AG04450 (cell line): ENCODE measurements at regions of chr4 and their contacts with region 1.

Region 1: GRCh38 chr4:84966383-84967242 is at the start of gene WDFY3:
- DNase-seq: peak; percentile 74
- H3K4me3 ChIP-seq: peak within 1 kb of the TSS; percentile 78
- H3K27ac ChIP-seq: peak within 1 kb of the TSS; percentile 81
- H3K27me3 ChIP-seq: no peaks in the 10 kb centered on the region
- CTCF ChIP-seq: peak; percentile 23; the same call in 1 of the 2 replicates
- polyA plus RNA-seq, gene WDFY3: 30.6 and 31.5 TPM in 2 replicates

Region 2: DNA sequence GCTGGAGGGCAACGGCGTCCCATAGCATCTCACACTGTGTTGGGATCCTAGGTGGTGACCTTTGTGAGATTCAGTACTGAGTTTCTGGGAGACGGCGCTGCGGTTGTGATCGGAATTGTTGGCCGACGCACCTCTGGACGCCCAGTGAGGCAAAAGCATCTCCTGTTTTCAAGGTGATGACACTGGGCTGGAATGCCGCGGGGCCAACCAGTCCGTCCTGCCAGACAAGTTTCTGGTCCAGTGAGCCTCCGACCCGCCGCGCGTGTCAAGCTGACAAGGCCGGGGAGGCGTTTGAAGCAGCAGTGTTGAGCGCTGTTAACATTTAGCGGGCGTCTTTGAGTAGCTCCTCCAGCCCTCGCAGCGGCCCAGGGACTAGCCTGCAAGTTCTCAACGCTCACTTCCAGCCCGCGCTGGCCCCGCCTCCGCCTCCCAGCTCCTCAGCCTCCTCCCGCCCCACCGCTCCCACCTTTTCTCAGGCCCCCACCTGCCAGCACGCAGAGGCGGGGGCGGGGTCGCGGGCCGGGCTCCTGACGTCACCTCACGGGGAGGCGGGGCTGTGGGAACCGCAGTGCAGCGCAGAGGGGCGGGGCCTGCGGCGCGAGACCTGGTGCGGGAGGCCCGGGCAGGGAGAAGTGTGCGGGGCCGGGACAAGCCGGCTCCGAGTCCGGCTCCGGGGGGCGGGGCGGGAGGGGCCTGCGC is 384.2 kb before region 1 on chr4:
- CTCF ChIA-PET with region 1: interaction called, 56 read pairs
- POLR2A ChIA-PET with region 1: interaction called, 3 read pairs
- DNase-seq: no peak
- H3K4me3 ChIP-seq: peak overlapping the region; percentile 58
- H3K27ac ChIP-seq: no peak overlapping the region
- H3K27me3 ChIP-seq: peaks cover 38% of the 10 kb centered on the region
- CTCF ChIP-seq: no peak

Region 3: GRCh38 chr4:84740057-84740456 is 226.6 kb before region 1 on chr4:
- CTCF ChIA-PET with region 1: interaction called, 20 read pairs
- POLR2A ChIA-PET with region 1: no interaction called
- DNase-seq: no peak
- H3K4me3 ChIP-seq: no peak overlapping the region
- H3K27ac ChIP-seq: no peak overlapping the region
- H3K27me3 ChIP-seq: no peaks in the 10 kb centered on the region
- CTCF ChIP-seq: no peak